ENCODE measurements at regions of chr10 and their contacts with region 1.

Region 1: GRCh38 chr10:119872860-119873681 is 428 bp upstream of the MCMBP start:
- DNase-seq: peak; percentile 91
- ATAC-seq: peak; percentile 94
- H3K4me3 Mint-ChIP-seq: peak overlapping the region; percentile 79
- H3K27ac Mint-ChIP-seq: peak overlapping the region; percentile 87
- H3K4me1 Mint-ChIP-seq: peaks cover 36% of the 10 kb centered on the region
- H3K27me3 Mint-ChIP-seq: peaks cover 4% of the 10 kb centered on the region

Region 2: DNA sequence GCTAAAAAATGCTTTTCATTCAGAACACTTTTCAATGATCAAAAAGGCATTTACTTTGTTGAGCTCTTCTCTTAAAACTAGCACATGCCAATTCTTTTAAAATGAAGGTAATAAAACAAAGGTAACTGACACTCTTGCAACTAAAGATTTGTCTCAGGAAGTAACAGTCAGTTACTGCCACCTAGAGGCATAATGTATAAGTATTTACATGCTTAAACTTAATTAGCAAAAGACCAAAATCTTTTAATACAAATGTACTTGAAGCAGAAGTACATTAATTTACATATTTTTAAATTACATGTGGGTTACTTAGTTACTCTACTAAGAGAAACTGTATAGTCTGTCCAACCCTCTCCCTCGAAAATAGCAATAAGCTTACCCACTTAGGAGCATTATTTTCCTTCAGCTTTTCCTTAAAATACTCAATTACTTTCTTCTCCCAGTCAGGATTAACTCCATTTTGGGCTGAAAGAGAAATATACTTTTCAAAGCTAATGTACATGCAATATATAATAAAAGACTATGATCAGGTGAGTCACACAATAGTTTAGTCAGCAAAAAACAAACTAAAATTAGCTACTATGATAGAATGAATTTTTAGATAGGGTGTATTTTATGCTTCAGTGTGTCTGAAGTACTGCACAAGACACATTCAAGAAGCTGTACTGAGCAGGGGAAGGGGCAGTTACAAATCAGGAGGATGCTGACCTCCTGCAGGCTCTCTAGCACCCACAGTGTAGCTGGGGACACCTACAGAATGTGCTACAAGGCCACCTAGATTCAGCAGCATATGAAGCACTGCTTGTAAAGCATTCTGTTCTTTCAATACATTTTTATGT is 13.4 kb before region 1 on chr10:
- CTCF ChIA-PET with region 1: interaction called, 38 read pairs
- DNase-seq: no peak
- ATAC-seq: peak; percentile 27
- H3K4me3 Mint-ChIP-seq: no peak overlapping the region
- H3K27ac Mint-ChIP-seq: peak overlapping the region; percentile 36
- H3K4me1 Mint-ChIP-seq: peaks cover 44% of the 10 kb centered on the region
- H3K27me3 Mint-ChIP-seq: no peaks in the 10 kb centered on the region

Region 3: GRCh38 chr10:119892188-119893065 is 19.4 kb after region 1 on chr10 and contains the start of gene SEC23IP:
- CTCF ChIA-PET with region 1: interaction called, 18 read pairs
- DNase-seq: peak; percentile 97
- ATAC-seq: peak; percentile 99
- H3K4me3 Mint-ChIP-seq: peak within 1 kb of the TSS; percentile 97
- H3K27ac Mint-ChIP-seq: peak within 1 kb of the TSS; percentile 95
- H3K4me1 Mint-ChIP-seq: peaks cover 36% of the 10 kb centered on the region
- H3K27me3 Mint-ChIP-seq: peaks cover 5% of the 10 kb centered on the region
- total RNA-seq, gene SEC23IP: 62.9 to 72.8 TPM

Measured in activated CD8-positive, alpha-beta memory T cell treated with anti-CD3 and anti-CD28 coated beads, Interleukin-2, amount 10 ng/mL, durations not matched to agents 7 days and 5 days (primary cell).